BJ (cell line): ENCODE measurements at regions of chr17 and their contacts with region 1.

Region 1: DNA sequence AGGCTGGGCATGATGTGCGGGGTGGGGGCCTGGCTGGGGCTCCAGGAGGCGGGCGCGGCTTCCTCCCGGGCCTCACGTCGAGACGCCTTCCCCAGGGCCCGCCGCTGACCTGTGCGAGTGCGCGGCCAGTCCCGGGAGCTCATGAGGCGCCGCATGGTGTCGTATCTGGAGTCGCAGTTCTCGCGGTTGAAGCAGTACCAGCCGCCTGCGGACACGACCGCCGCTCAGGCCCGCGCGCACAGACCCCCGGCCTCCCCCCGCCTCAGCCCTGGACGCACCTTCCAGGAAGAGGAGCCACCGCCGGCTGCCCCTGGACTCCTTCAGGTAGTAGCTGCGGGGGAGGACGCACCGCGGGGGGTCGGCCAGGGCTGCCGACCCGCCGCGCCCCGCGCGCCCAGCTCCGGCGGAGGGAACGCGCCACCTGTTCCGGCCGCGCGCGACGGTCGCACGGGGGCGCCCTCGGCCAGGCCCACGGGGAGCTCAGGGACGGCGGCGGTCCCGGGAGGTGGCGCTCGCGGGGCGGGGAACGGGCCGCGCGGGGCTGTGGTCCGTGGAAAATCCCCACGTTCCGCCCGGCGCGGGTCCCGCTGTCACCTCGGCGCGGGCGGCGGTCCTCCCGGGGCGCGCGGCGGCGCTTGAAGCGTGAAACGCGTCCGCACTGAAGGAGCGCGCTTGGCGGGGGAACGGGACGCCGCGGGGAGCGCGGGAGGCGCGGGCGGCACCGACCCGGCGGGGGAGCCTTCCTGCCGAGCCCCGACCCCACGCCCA is 1.4 kb downstream of the NOTUM start:
- DNase-seq: no peak
- H3K4me3 ChIP-seq: peak overlapping the region; percentile 23; the same call in 1 of the 2 replicates
- H3K27me3 ChIP-seq: peaks cover 22% of the 10 kb centered on the region
- CTCF ChIP-seq: peak; percentile 27; the same call in 1 of the 2 replicates

Region 2: DNA sequence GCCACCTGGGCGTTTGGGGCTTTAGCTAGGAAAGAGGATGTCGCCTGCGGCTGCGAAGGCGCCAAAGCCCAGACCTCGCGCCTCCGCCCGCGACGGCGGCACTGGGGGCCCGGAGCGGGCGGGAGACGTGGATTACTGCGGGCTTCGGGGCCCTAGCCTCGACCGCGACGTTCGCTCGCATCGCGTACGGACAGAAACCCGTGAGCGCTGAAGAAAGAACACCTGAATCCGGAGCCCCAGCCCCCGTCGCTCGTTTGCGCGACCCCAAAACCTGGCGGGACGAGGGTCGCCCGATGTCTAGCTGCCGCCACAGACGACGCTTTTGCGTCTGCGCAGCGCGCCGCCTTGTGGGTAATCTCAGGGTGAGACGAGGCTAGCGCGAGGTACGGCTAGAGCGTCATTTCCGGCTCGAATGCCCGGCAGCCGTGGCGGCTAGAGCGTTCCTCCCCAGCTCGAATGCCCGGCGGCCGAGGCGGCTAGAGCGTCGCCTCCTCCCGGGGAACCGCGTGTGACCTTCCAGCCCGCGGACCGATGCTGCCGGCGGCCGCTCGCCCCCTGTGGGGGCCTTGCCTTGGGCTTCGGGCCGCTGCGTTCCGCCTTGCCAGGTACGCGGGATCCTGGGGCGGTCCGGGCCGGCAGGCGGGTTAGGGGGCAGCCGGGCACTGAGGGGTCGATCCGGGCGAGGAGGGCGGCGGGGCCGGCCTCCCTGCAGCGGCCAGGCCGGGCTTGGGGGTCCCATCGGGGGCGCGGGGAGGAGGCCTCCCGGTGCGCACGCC is 256.4 kb before region 1 on chr17 and contains the start of gene MRPL12:
- CTCF ChIA-PET with region 1: no interaction called
- POLR2A ChIA-PET with region 1: no interaction called
- DNase-seq: peak; percentile 49
- H3K4me3 ChIP-seq: peak within 1 kb of the TSS; percentile 62
- H3K27me3 ChIP-seq: no peaks in the 10 kb centered on the region
- CTCF ChIP-seq: peak; percentile 25
- polyA plus RNA-seq, gene MRPL12: 56.2 and 63.0 TPM in 2 replicates

Region 3: GRCh38 chr17:81722184-81723120 is 237.1 kb before region 1 on chr17:
- CTCF ChIA-PET with region 1: no interaction called
- POLR2A ChIA-PET with region 1: no interaction called
- DNase-seq: no peak
- H3K4me3 ChIP-seq: no peak overlapping the region
- H3K27me3 ChIP-seq: no peaks in the 10 kb centered on the region
- CTCF ChIP-seq: no peak

Region 4: DNA sequence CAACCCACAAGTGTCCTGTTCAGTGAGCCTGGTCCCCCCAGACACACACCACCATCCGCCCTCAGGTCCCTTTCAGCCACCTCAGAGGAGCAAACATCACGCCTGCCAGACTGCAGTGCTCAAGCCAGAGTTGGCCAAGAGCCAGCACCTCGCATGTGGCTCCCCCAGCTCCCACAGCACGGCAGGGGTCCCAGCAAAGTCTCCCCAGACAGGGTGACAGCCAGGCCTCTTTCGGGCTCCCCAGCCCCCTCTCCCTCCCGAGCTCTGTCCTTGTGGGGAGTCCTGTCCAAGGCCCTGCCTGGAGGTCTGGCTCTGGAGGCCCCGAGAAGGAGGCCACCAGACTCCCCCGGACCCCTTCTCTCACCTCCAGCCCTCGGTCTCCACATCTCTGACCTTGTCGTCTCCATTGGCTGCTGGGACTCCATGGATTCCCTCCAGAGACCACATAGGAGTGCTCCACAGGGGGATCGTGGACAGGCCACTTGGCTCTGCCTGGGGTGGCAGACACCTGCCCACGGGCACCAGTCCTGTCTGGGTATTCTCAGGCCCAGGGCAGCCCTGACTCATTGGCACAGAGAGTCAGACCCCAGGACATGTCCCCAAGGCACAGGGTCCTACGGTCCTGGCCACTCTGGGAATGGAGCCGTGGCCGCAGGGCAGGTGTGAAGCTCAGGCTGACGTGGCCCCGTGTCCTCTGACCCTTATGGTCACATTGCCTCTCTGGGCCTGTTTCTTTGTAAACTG is 10.7 kb before region 1 on chr17:
- CTCF ChIA-PET with region 1: interaction called, 24 read pairs
- POLR2A ChIA-PET with region 1: no interaction called
- DNase-seq: no peak
- H3K4me3 ChIP-seq: no peak overlapping the region
- H3K27me3 ChIP-seq: 0 out of 2 replicates have a peak, but pooled peaks cover 2% of the 10 kb centered on the region
- CTCF ChIP-seq: no peak

Region 5: DNA sequence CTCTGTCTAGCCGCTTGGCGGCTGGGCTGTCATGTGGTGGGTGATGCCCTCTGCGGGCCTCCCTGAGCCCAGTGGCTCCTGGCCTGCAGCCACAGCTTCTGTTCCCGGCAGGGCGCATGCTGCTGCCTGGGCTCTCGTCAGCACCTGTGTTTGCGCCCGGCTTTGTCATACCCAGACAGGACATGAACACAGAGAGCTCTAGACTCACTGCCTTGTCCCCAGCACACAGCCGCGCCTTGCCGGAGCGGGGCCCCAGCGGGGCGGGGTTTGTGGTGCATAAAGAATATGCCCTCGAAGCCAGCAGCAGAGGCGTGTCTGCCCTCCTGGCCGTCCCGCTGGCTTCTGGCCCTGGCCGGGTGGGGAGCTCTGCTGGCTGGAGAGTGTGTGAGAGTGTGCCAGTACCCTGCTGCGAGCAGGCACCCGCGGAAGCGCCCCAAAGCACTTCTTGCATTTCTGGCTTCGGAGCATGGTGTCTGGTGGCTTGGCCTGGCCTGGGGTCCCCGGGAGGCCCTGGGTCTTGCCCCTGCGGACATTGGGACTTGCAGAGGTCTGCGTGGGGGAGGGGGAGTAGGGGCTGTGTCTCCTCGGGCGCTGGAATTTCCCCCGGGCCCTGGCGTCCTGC is 32.2 kb after region 1 on chr17:
- CTCF ChIA-PET with region 1: interaction called, 16 read pairs
- POLR2A ChIA-PET with region 1: no interaction called
- DNase-seq: no peak
- H3K4me3 ChIP-seq: no peak overlapping the region
- H3K27me3 ChIP-seq: no peaks in the 10 kb centered on the region
- CTCF ChIP-seq: no peak

Region 6: DNA sequence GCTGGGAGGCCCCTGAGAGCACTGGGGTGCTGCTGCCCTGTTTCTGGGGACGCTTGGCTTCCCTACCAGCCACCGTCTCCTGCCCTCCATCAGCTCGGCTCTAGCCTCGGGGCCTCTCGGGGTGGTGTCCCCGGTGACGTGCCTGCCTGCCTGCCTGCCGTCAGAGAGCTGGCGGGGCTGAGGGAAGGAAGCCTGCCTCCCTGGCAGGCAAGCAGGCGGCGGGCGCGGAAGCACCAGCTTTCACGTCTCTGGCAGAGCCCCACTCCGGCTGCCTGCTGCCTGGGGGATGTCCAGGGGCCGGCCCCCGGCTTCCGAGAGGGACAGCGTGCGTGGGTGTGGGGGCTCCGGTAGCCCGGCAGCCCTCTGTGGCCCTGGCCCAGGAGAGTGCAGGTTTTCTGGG is 53.8 kb after region 1 on chr17:
- CTCF ChIA-PET with region 1: interaction called, 218 read pairs
- POLR2A ChIA-PET with region 1: no interaction called
- DNase-seq: no peak
- H3K4me3 ChIP-seq: no peak overlapping the region
- H3K27me3 ChIP-seq: no peaks in the 10 kb centered on the region
- CTCF ChIP-seq: no peak

Region 7: GRCh38 chr17:82030470-82031302 is 71.1 kb after region 1 on chr17:
- CTCF ChIA-PET with region 1: interaction called, 44 read pairs
- POLR2A ChIA-PET with region 1: no interaction called
- DNase-seq: no peak
- H3K4me3 ChIP-seq: peak overlapping the region; percentile 47
- H3K27me3 ChIP-seq: no peaks in the 10 kb centered on the region
- CTCF ChIP-seq: peak; percentile 91

Region 8: GRCh38 chr17:82153745-82154375 is 194.3 kb after region 1 on chr17:
- CTCF ChIA-PET with region 1: interaction called, 11 read pairs
- POLR2A ChIA-PET with region 1: no interaction called
- DNase-seq: no peak
- H3K4me3 ChIP-seq: no peak overlapping the region
- H3K27me3 ChIP-seq: no peaks in the 10 kb centered on the region
- CTCF ChIP-seq: peak; percentile 93